SK-N-SH (cell line): ENCODE measurements at regions of chr16 and their contacts with region 1.

Region 1: DNA sequence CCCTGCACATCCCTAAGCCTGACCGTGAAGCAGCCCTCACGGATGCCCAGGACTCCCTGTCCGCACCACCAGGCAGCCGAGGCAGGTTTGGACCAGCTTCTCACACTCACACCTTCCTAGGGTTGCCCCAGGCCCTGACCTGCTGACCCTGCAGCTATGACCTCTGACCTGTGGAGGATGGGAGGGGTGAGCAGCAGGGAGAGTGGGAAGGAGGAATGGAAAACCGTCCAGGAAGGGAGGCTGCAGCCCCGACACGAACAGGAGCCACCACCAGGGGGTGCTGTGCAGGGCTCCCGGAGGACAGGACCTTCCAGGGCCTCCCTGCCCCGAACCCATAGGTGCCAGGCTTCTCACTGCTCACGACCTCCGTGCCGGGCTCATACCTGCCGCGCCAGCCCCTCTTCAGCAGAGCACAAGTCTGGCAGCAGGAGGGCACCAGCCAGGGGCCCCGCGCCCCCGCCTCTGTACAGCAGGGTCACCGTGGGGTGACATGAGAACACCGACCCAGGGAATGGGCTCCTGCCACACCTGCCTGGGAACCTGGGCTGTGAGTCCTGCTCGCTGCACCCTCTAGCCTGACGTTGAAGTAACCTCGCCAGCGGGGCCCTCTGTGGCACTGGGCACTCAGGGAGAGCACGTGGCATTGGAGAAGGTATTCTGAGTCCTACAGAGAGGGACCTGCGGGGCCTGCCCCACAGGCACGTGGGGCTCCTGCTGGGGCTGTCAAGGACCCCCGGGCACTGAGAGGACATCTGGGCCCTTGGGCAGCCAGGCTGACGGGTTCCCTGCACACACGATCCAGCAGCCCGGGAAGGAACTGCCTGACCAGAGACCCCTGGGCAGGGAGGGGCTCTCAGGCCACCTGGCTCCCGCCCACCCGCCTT is 37.6 kb downstream of the CTU2 start:
- DNase-seq: peak; percentile 95
- H3K4me3 ChIP-seq: peak overlapping the region in 1 of 2 experiments; percentile 9; a peak in 1 of 4 replicates
- H3K27ac ChIP-seq: no peak overlapping the region
- H3K4me1 ChIP-seq: peaks cover 0 to 3% of the 10 kb centered on the region in 2 experiments; a peak in 1 of 4 replicates
- H3K27me3 ChIP-seq: no peaks in the 10 kb centered on the region
- CTCF ChIP-seq: peak; percentile 81
- EP300 ChIP-seq: no peak
- RAD21 ChIP-seq: peak; percentile 64

Region 2: GRCh38 chr16:88718178-88718577 is 25.8 kb before region 1 on chr16:
- CTCF ChIA-PET with region 1: no interaction called
- POLR2A ChIA-PET with region 1: no interaction called
- DNase-seq: no peak
- H3K4me3 ChIP-seq: no peak overlapping the region
- H3K27ac ChIP-seq: no peak overlapping the region
- H3K4me1 ChIP-seq: no peaks in the 10 kb centered on the region; a peak in 1 of 4 replicates
- H3K27me3 ChIP-seq: no peaks in the 10 kb centered on the region
- CTCF ChIP-seq: no peak
- EP300 ChIP-seq: no peak
- RAD21 ChIP-seq: no peak

Region 3: GRCh38 chr16:88785106-88785924 is 41.4 kb after region 1 on chr16 and contains the start of gene PIEZO1:
- CTCF ChIA-PET with region 1: interaction called, 31 read pairs
- POLR2A ChIA-PET with region 1: no interaction called
- DNase-seq: peak; percentile 86
- H3K4me3 ChIP-seq: peak within 1 kb of the TSS; percentile 58 to 76
- H3K27ac ChIP-seq: peak within 1 kb of the TSS; percentile 43 to 84; a peak in 3 of 4 replicates
- H3K4me1 ChIP-seq: peaks cover 0 to 36% of the 10 kb centered on the region in 2 experiments; a peak in 3 of 4 replicates
- H3K27me3 ChIP-seq: no peaks in the 10 kb centered on the region
- CTCF ChIP-seq: peak; percentile 69
- EP300 ChIP-seq: no peak
- RAD21 ChIP-seq: peak; percentile 74
- polyA plus RNA-seq, gene PIEZO1: 111 and 184 TPM in 2 replicates

Region 4: DNA sequence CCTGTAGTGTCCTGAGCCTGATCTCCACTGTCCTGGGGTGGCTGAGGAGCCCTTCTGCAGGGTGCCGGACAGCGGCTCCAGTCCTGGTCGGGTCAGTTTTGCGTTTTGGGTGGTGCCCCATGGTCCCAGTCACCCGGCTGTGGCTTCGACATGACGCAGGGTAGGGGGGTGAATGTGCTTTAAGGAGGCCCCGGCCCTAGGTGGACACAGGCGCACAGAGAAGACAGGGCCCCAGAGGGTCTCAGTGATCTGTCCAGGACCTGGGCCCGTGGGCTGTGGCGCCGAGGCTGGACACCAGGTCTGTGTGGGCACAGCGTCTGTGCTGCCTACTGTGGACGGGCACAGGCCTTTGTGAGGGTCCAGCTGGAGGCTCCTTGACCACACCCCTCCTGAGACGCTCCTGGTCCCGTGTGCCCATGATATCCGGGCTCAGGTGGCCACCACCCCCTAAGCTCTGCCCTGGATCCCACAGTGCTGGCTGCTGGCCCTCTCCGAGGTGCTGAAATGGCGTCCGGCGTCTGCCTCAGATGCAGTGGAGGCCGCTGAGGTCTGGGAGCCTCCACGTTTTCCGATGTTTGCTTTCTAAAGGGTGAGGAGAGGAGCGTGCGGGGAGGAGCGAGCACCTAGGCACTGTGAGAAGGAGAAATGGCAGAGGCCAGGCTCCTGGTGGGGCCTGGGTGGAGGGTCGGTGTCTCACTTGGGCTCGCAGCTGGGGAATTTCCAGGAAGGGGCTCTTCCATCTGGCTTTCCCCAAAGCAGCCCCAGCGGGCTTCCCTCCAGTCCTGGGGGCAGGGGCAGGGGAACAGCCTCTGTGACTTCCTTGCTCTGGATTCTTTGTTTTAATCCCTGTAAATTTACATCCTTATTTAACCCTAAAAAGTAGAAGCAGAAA is 293.6 kb after region 1 on chr16:
- CTCF ChIA-PET with region 1: no interaction called
- POLR2A ChIA-PET with region 1: no interaction called
- DNase-seq: no peak
- H3K4me3 ChIP-seq: no peak overlapping the region
- H3K27ac ChIP-seq: no peak overlapping the region
- H3K4me1 ChIP-seq: no peaks in the 10 kb centered on the region
- H3K27me3 ChIP-seq: no peaks in the 10 kb centered on the region; the same call in 1 of the 2 replicates
- CTCF ChIP-seq: no peak
- EP300 ChIP-seq: no peak
- RAD21 ChIP-seq: no peak